AG04449 (cell line): ENCODE measurements at regions of chr20 and their contacts with region 1.

Region 1: DNA sequence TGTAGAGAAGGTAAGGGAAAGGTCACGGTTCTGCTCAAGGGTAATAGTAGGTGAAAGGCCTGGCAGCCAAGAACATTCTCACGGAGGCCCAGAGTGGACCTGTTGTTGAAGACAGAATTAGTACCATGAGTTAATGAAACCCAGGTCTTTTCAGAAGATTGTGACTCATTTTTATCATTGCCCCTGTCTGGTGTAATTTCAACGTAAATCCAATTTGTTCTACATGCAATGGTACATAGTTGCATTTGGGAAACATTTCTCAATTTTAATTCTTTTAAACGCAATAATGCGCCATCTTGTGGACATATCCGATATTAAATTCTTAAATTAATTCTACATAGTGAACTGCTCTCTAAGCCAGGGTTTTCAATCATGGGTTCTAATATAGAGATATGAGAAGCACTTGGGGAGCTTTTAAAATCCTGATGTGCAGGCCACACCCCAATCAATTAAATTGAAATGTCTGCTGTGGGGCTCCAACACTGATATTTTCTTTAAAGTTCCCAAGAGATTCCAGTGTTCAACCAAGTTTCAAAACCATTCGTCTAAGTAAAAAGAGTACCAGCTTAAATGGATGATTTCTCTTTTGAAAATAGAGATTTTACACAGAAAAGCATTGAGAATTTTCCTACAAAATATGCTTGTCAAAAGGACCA is 257.4 kb downstream of the PLCB1 start:
- DNase-seq: no peak
- H3K4me3 ChIP-seq: no peak overlapping the region
- CTCF ChIP-seq: no peak

Region 2: DNA sequence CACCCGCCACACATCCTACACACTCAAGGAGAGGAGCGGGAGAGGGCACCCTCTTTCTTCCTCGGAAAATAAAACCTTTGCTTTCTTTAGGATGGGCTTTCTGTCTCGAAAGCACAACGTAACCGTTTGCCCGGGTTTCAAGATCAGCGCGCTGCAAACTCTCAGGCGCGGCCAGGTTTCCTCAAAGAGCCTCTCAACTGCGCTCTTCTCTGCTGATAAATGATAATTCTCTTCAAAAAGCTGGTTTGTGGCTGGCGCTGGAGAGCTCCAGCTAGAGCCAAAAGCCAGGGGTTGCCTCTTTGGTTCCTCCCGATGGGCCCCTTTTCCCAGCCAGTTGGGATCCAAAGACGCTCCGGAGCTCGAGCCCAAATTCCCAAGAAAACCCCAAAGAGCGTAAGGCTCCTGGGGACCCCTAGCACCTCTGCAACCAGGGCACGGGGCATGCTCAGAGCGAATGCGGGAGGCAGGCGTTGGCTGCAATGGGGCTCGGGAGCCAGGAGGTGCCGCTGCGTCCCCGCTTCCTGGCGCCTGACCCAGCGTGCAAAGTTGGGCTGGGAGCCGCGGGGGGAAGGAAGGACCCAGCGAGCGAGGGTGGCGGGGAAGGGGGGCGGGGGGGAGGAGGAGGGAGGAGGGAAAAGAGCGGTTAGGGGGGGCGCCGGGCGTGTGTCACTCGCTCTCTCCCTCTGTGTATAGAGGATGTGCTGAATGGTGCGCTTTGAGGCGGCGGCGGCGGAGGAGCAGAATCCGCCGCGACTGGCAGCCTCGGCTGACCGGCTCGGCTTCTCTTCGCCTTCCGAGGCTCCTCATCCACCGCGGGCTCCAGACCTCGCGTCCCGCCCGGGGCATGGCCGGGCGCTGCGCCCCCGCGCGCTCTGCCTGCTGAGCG is 257.7 kb before region 1 on chr20 and contains the start of gene PLCB1:
- CTCF ChIA-PET with region 1: interaction called, 153 read pairs
- POLR2A ChIA-PET with region 1: no interaction called
- DNase-seq: no peak
- H3K4me3 ChIP-seq: peak within 1 kb of the TSS; percentile 76
- CTCF ChIP-seq: peak; percentile 99

Region 3: GRCh38 chr20:8139899-8140298 is 249.6 kb before region 1 on chr20:
- CTCF ChIA-PET with region 1: interaction called, 153 read pairs
- POLR2A ChIA-PET with region 1: no interaction called
- DNase-seq: no peak
- H3K4me3 ChIP-seq: no peak overlapping the region
- CTCF ChIP-seq: no peak

Region 4: GRCh38 chr20:8372824-8373380 is 16.6 kb before region 1 on chr20:
- CTCF ChIA-PET with region 1: interaction called, 24 read pairs
- POLR2A ChIA-PET with region 1: no interaction called
- DNase-seq: no peak
- H3K4me3 ChIP-seq: no peak overlapping the region
- CTCF ChIP-seq: no peak

Region 5: GRCh38 chr20:8399947-8400346 is 10.4 kb after region 1 on chr20:
- CTCF ChIA-PET with region 1: interaction called, 77 read pairs
- POLR2A ChIA-PET with region 1: no interaction called
- DNase-seq: no peak
- H3K4me3 ChIP-seq: no peak overlapping the region
- CTCF ChIP-seq: no peak

Region 6: GRCh38 chr20:8414586-8415274 is 25.2 kb after region 1 on chr20:
- CTCF ChIA-PET with region 1: interaction called, 12 read pairs
- POLR2A ChIA-PET with region 1: no interaction called
- DNase-seq: peak; percentile 69
- H3K4me3 ChIP-seq: no peak overlapping the region
- CTCF ChIP-seq: no peak